PC-9 (cell line): ENCODE measurements at regions of chr3 and their contacts with region 1.

Region 1: DNA sequence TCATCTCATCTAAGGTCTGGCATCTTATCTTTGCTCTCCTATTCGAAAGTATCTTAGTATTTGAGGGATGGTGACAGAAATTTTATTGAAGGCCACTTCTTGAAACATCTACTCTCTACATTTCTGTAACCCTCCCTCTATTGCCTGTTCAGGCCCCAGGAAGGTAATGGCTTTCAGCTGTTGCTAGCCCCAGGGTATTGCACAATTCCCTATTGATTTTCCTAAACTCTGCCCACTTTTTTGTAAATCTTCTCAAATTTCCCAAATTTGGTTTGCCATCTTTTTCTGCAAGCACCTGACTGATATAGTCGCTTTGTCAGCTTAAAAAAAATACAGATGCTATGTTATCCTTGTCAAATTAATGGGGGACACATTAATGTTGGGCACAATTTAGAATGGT is 242.1 kb downstream of the RAP2B start:
- DNase-seq: no peak
- H3K4me3 ChIP-seq: no peak overlapping the region
- H3K27ac ChIP-seq: no peak overlapping the region
- H3K4me1 ChIP-seq: peaks cover 7% of the 10 kb centered on the region; the same call in 1 of the 2 replicates
- H3K27me3 ChIP-seq: no peaks in the 10 kb centered on the region
- CTCF ChIP-seq: no peak

Region 2: DNA sequence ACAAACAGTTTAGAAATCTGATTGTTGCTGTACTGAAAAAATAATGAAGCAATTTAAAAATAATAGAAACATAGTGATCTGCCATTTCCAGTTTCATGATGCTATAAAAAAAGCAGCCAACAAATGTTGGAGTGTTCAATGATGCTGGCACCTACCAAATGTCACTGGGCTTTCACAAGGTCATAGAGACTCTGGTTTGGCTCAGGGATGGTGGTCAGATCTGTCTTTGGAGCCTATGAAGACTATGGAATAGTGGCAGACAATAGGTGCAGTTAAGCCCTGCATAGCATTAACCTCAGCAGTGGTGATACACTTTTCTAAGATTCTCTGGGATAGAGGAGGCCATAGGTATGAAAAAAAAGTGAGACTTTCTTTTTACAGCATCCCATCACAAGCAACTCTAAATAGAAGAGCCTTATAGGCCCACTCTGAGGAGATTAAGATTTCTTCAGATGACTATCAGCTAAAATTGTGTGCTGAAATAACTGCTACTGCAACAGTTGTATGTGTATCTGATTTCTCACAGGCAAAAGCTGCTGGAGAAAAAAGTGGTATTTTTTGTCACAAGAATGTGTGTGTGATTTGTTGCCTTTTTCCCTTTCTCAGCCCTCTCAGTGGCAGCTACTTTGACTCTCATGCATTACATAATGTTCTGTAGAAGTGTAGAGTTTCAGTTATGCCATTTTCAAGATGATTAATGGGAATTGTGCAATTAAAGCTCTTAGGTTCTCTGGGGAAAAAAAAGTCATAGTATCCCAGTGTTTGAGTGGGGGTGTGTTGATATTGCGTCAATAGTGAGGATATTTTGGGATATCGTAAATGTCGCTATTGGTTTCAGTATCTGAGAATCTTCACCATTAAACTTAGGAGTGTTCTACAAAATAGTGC is 998.0 kb before region 1 on chr3:
- CTCF ChIA-PET with region 1: no interaction called
- POLR2A ChIA-PET with region 1: interaction called, 11 read pairs
- intact Hi-C with region 1: no loop called
- DNase-seq: peak in 1 of 2 experiments; percentile 83
- H3K4me3 ChIP-seq: no peak overlapping the region
- H3K27ac ChIP-seq: peak overlapping the region; percentile 53
- H3K4me1 ChIP-seq: peaks cover 11% of the 10 kb centered on the region
- H3K27me3 ChIP-seq: no peaks in the 10 kb centered on the region
- CTCF ChIP-seq: no peak

Region 3: GRCh38 chr3:153768561-153769469 is 364.7 kb after region 1 on chr3:
- CTCF ChIA-PET with region 1: no interaction called
- POLR2A ChIA-PET with region 1: no interaction called
- intact Hi-C with region 1: no loop called
- DNase-seq: peak; percentile 38 to 50
- H3K4me3 ChIP-seq: no peak overlapping the region
- H3K27ac ChIP-seq: no peak overlapping the region
- H3K4me1 ChIP-seq: 0 out of 2 replicates have a peak, but pooled peaks cover 9% of the 10 kb centered on the region
- H3K27me3 ChIP-seq: no peaks in the 10 kb centered on the region
- CTCF ChIP-seq: peak; percentile 93